Colonic mucosa (tissue), 4 donors: ENCODE measurements at regions of chr6 and their contacts with region 1.

Region 1: DNA sequence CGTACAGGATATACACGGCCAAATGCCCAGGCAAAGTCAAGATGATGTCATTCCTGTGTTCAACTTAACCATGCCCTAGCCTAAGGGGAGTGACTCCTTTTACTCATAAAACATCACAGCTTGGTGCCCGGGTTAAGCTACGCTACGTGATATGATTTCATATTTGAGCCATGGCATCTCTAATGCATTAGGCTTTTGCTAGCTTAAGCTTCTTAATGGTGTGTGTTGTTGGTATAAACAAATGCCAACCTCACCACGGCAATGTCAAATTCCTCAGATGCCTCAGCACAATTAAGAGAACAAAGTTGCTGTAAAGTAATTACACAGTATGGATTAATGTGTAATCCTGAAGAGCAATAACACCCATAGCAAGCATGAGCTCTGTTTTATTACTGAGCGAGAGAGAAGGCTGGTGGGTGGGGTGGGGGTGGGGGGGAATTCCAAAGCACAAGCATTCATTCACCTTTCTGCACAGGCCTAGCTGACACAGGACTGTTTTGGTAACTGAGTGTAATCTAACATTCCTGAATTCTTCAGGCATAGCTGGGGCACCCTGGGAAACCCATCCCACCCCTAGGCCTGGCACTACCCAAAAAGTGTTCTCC is 44.7 kb upstream of the CNKSR3 start:
- DNase-seq: peak; percentile 50
- H3K4me3 ChIP-seq: no peak overlapping the region
- H3K27ac ChIP-seq: peak overlapping the region; percentile 59
- H3K4me1 ChIP-seq: no peaks in the 10 kb centered on the region
- H3K27me3 ChIP-seq: no peaks in the 10 kb centered on the region
- CTCF ChIP-seq: no peak

Region 2: GRCh38 chr6:154515826-154516225 is 39.3 kb before region 1 on chr6:
- intact Hi-C with region 1: loop called (anchors 2 kb)
- DNase-seq: no peak
- H3K4me3 ChIP-seq: no peak overlapping the region
- H3K27ac ChIP-seq: no peak overlapping the region
- H3K4me1 ChIP-seq: no peaks in the 10 kb centered on the region
- H3K27me3 ChIP-seq: no peaks in the 10 kb centered on the region
- CTCF ChIP-seq: no peak

Region 3: GRCh38 chr6:154835307-154835706 is 280.1 kb after region 1 on chr6:
- intact Hi-C with region 1: no loop called
- DNase-seq: no peak
- H3K4me3 ChIP-seq: no peak overlapping the region
- H3K27ac ChIP-seq: no peak overlapping the region
- H3K4me1 ChIP-seq: no peaks in the 10 kb centered on the region
- H3K27me3 ChIP-seq: no peaks in the 10 kb centered on the region
- CTCF ChIP-seq: no peak